Left ventricle myocardium inferior (tissue), 1 donor: ENCODE measurements at regions of chr18 and their contacts with region 1.

Region 1: DNA sequence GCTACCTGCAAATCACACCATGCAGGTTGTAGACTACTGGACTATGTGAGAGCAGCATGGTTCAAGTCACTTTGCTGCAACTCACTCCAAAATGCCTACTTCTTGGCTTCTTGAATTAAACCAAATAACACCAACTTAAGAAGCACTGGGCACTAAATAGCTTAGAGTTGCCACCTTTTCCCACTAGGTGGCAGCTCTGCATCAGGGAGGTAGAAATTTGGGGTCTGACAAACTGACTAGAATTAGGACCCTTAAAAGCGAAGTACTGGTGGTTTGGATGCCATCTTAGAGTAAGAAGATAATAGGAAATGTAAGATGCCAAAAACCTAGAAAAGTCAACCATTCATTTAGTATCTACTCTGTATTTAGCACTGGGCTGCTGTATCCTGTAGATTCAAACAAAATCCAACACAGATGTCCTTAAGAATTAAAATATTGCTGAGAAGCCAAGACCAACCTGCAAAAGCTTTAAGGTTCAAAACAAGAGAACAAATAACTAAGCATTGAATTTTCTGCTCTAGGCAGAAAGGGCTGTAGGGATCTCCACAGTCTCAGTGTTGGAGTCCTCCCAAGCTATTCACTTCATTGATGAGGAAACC is 65.5 kb downstream of the CCBE1 start:
- DNase-seq: no peak
- H3K4me3 ChIP-seq: no peak overlapping the region
- H3K27ac ChIP-seq: no peak overlapping the region
- H3K4me1 ChIP-seq: peaks cover under 1% of the 10 kb centered on the region
- H3K27me3 ChIP-seq: no peaks in the 10 kb centered on the region
- CTCF ChIP-seq: peak; percentile 68

Region 2: DNA sequence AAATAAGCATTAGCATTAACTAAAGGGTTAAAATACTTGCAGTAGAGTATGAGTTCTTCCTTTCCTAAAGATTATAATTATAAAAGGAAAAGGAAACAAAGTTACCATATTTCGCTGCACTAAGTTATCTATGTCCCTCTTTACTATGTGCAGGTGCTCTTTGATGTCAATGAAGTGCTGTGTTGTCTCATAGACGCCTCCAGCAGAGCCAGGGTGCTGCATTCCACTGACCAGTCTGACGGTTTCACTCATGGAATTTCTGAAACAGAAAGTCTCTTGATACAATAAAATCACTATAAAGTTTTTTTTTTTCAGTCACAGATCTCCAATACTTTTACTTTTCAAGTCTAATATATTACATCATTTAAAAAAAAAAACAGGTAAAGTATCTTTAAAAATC is 298.7 kb before region 1 on chr18:
- intact Hi-C with region 1: no loop called
- DNase-seq: no peak
- H3K4me3 ChIP-seq: no peak overlapping the region
- H3K27ac ChIP-seq: no peak overlapping the region
- H3K4me1 ChIP-seq: peaks cover 22% of the 10 kb centered on the region
- H3K27me3 ChIP-seq: no peaks in the 10 kb centered on the region
- CTCF ChIP-seq: no peak

Region 3: DNA sequence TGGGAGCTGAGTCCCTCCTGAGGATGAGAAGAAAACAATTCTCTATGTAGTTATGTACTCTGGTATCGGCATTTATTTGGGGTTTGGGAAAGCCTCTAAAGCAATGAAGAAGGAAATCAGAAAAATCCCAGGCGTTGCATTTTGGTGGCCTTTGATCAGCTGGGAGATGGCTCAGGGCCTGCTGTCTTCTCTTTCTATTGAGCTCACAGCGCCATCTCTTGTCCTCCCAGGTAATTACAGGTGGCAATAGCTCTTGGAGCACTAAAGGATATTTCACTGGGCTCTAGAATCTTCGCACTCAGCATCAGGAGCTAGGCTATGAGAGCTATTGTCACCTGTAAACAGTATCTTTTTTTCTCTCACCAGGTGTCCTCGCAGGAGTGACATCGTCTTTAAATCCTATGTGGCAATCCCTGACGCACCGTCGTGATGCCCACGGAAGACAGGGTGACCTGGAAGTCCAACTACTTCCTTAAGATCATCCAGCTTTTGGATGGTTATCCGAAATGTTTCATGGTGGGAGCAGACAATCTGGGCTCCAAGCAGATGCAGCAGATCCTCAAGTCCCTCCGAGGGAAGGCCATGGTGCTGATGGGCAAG is 192.0 kb after region 1 on chr18:
- intact Hi-C with region 1: loop called (anchors 5 kb)
- DNase-seq: peak; percentile 20
- H3K4me3 ChIP-seq: no peak overlapping the region
- H3K27ac ChIP-seq: no peak overlapping the region
- H3K4me1 ChIP-seq: no peaks in the 10 kb centered on the region
- H3K27me3 ChIP-seq: peaks cover 24% of the 10 kb centered on the region
- CTCF ChIP-seq: peak; percentile 84

Region 4: DNA sequence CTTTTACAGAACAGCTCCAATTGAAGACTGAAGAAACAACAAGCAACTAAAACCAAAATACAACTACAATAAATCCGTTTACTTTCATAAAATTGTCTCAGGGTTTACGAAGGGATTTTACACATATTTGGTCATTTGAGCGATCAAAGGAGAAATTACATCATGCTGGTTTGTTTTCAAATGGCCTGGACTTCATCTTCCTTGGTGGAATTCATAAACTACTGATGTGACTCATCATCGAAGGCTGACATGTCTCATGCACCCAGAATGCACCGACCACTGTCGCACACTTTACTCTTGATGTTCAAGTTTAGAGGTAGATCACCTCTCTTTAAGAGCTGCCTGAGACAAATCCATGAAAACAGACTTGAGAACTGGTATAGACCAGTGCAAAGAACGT is 242.5 kb after region 1 on chr18:
- intact Hi-C with region 1: no loop called
- DNase-seq: no peak
- H3K4me3 ChIP-seq: no peak overlapping the region
- H3K27ac ChIP-seq: no peak overlapping the region
- H3K4me1 ChIP-seq: no peaks in the 10 kb centered on the region
- H3K27me3 ChIP-seq: peaks cover 29% of the 10 kb centered on the region
- CTCF ChIP-seq: no peak